Caco-2 (cell line): ENCODE measurements at regions of chr13 and their contacts with region 1.

Region 1: DNA sequence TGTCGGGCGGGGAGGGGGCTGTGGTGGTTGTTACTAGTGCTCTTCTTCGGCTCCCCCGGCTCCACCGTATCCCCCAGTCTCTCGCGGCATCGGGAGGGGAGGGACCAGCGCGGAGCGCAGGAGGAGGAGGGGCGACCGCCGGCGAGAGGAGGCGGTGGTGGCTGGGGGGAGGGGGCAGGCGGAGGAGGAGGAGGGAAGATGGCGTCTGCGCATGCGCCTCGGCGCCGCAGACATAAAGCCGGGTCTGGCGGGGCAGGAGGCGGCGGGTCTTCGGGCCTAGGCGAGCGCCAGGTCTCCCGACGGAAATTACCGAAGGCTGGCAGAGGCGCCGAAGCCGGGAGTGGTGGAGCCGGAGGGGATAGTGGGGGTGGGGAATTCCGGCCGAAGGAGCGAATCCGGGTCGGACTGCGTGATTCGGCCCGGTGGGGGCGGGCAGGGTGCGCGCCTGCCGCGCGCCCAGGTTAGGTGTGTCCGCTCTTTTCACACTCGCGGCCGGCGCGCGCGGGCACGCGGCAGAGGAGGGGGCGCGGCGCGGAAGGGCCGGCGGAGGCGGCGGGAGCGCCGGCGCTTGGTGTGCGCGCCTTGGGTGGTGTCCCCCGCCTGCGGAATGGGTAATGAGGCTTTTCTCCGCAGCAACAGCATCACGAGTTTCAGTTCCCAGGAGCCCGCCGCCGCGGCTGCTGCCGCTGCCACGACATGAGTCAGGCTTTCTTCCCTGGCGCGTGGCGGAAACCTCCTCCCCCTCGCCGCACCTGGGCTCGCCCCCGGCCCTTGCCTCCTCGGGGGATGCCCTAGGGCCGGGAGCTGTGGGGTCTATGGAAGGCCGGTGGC is 1.3 kb upstream of the TSC22D1 start:
- DNase-seq: peak; percentile 99
- H3K4me3 ChIP-seq: peak overlapping the region; percentile 99
- H3K4me3 Mint-ChIP-seq: peak overlapping the region; percentile 74
- H3K27ac Mint-ChIP-seq: peak overlapping the region; percentile 85
- H3K4me1 ChIP-seq: peaks cover 28% of the 10 kb centered on the region
- H3K4me1 Mint-ChIP-seq: peaks cover 28% of the 10 kb centered on the region
- H3K27me3 ChIP-seq: no peaks in the 10 kb centered on the region
- H3K27me3 Mint-ChIP-seq: no peaks in the 10 kb centered on the region
- CTCF ChIP-seq: no peak

Region 2: DNA sequence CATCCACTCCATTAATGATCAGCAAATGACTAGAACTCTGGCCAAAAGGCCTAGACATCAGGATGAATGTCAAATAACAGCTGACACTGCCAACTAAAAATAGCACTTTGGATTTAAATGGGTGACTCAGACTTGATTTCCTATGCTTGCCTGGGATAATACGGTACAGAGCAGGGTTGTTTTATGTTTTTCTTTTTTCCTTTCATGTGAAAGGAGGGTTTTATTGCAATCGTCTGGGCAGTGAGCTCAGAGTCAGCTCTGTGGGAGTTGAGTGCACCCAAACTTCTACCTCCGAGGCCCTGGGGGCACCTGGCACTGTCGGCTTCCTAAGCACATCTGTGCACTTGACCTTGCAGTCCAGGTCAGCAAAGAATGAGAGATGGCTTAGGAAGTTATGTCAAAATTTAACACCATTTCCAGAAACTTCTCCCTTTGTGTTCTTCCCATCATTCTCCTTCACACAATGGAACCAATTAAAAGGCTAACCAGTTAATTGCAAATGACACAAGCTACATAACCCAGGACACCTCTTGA is 563.6 kb before region 1 on chr13:
- CTCF ChIA-PET with region 1: interaction called, 12 read pairs
- POLR2A ChIA-PET with region 1: no interaction called
- intact Hi-C with region 1: no loop called
- DNase-seq: no peak
- H3K4me3 ChIP-seq: no peak overlapping the region
- H3K4me3 Mint-ChIP-seq: no peak overlapping the region
- H3K27ac Mint-ChIP-seq: no peak overlapping the region
- H3K4me1 ChIP-seq: no peaks in the 10 kb centered on the region
- H3K4me1 Mint-ChIP-seq: no peaks in the 10 kb centered on the region
- H3K27me3 ChIP-seq: no peaks in the 10 kb centered on the region
- H3K27me3 Mint-ChIP-seq: no peaks in the 10 kb centered on the region
- CTCF ChIP-seq: no peak

Region 3: DNA sequence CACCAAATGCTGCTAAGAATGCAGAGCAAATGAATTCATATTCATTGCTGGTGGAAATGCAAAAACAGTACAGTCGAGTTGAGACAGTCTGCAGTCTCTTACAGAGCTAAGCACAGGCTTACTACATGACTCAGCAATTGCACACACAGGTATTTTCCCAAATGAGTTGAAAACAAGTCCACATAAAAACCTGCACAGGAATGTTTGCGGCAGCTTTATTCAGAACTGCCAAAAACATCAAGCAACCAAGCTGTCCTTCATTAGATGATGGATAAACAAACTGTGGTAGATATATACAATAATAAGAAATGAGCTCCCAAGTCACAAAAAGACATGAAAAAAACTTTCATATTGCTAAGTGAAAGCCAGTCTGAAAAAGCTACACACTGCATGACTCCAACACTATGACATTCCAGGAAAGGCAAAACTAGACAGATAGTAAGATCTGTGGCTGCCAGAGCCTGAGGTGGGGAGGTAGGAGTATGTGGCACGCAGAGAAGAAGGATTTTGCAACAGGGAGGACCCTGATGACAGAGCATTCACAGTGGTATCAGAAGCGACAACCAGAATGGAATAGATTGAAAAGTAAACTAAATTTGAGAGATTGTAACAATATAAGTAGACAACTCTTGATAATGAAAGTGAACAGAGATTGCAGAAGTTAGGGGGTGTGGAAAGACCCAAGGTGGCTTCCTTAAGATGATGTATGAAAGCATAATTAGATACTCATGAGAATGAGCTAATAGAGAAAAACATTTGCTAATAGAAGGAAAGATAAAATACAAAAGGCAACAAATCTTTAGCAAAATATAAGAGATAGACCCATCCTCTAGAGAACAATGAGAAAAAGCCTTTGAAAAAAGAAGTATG is 54.1 kb before region 1 on chr13:
- CTCF ChIA-PET with region 1: interaction called, 3 read pairs
- POLR2A ChIA-PET with region 1: no interaction called
- intact Hi-C with region 1: loop called (anchors 1 kb)
- DNase-seq: peak in 1 of 2 experiments; percentile 43
- H3K4me3 ChIP-seq: no peak overlapping the region
- H3K4me3 Mint-ChIP-seq: no peak overlapping the region
- H3K27ac Mint-ChIP-seq: no peak overlapping the region
- H3K4me1 ChIP-seq: peaks cover 11% of the 10 kb centered on the region
- H3K4me1 Mint-ChIP-seq: peaks cover 15% of the 10 kb centered on the region
- H3K27me3 ChIP-seq: no peaks in the 10 kb centered on the region
- H3K27me3 Mint-ChIP-seq: no peaks in the 10 kb centered on the region
- CTCF ChIP-seq: no peak

Region 4: GRCh38 chr13:44565881-44566280 is 11.6 kb before region 1 on chr13:
- CTCF ChIA-PET with region 1: no interaction called
- POLR2A ChIA-PET with region 1: no interaction called
- intact Hi-C with region 1: no loop called
- DNase-seq: no peak
- H3K4me3 ChIP-seq: no peak overlapping the region
- H3K4me3 Mint-ChIP-seq: no peak overlapping the region
- H3K27ac Mint-ChIP-seq: no peak overlapping the region
- H3K4me1 ChIP-seq: peaks cover 20% of the 10 kb centered on the region
- H3K4me1 Mint-ChIP-seq: peaks cover 31% of the 10 kb centered on the region
- H3K27me3 ChIP-seq: no peaks in the 10 kb centered on the region
- H3K27me3 Mint-ChIP-seq: no peaks in the 10 kb centered on the region
- CTCF ChIP-seq: no peak

Region 5: DNA sequence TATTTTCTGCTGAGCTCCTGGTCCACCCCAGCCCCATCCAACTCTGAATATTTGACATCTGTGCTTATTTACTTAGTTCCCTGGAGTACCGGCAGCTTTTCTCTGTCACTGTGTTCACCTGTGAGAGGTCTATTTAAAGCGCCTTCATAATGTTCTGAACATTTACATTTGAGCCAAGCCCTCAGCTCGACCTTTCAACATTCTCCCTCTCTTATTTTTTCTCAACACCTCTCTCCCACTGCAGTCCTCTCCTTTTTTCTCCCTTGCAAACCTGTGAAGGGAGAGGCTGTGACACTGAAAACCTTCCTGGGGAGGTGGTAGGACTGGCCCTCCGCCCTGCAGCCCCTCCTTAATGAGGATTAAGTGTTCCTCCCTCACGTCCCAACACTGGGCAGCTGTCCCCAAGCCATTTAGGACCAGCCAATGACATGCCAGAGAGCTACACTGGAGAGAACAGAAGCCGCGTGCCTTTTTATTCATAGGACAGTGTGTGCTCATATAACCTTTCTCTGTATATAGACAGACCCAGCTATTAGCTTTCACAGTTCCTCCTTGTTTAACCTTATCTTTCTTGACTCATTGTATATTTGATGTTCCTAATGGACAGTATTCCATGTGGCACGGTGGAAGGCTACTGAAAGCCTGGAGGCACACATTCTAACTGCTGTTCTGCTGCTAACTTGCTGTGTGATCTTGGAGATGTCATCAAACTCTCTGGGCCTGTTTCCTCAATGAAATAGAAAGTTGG is 277.0 kb after region 1 on chr13:
- CTCF ChIA-PET with region 1: no interaction called
- POLR2A ChIA-PET with region 1: interaction called, 4 read pairs
- intact Hi-C with region 1: loop called (anchors 1 kb)
- DNase-seq: peak; percentile 66 to 79
- H3K4me3 ChIP-seq: peak overlapping the region; percentile 21
- H3K4me3 Mint-ChIP-seq: peak overlapping the region; percentile 74
- H3K27ac Mint-ChIP-seq: peak overlapping the region; percentile 73
- H3K4me1 ChIP-seq: peaks cover 37% of the 10 kb centered on the region
- H3K4me1 Mint-ChIP-seq: peaks cover 45% of the 10 kb centered on the region
- H3K27me3 ChIP-seq: no peaks in the 10 kb centered on the region
- H3K27me3 Mint-ChIP-seq: no peaks in the 10 kb centered on the region
- CTCF ChIP-seq: no peak

Region 6: GRCh38 chr13:44969551-44970484 is 392.4 kb after region 1 on chr13:
- CTCF ChIA-PET with region 1: no interaction called
- POLR2A ChIA-PET with region 1: no interaction called
- intact Hi-C with region 1: loop called (anchors 10 kb)
- DNase-seq: peak in 1 of 2 experiments; percentile 62
- H3K4me3 ChIP-seq: no peak overlapping the region
- H3K4me3 Mint-ChIP-seq: no peak overlapping the region
- H3K27ac Mint-ChIP-seq: no peak overlapping the region
- H3K4me1 ChIP-seq: peaks cover 14% of the 10 kb centered on the region
- H3K4me1 Mint-ChIP-seq: peaks cover 14% of the 10 kb centered on the region
- H3K27me3 ChIP-seq: no peaks in the 10 kb centered on the region
- H3K27me3 Mint-ChIP-seq: no peaks in the 10 kb centered on the region
- CTCF ChIP-seq: peak; percentile 74 to 81

Region 7: DNA sequence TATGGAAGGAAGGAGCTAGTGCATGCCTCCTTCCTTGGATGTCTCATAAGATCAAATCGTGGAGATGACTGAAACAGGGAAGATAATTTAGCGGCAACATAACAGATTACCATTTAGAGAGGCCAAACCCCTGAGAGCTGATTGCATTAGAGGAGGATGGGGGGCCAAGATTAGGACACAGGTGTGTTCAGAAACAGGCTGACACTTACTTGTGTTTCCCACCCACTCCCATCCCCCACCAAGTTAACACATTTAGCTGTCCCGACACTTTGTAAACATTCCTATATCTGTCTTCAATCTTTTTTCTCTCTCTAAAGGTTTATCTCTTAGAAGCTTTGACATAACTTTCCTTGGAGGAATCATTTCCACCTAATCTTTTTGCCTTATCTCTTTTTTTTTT is 672.2 kb after region 1 on chr13:
- CTCF ChIA-PET with region 1: interaction called, 11 read pairs
- POLR2A ChIA-PET with region 1: no interaction called
- intact Hi-C with region 1: no loop called
- DNase-seq: peak in 1 of 2 experiments; percentile 24
- H3K4me3 ChIP-seq: no peak overlapping the region
- H3K4me3 Mint-ChIP-seq: peak overlapping the region; percentile 2
- H3K27ac Mint-ChIP-seq: peak overlapping the region; percentile 65
- H3K4me1 ChIP-seq: peaks cover 44% of the 10 kb centered on the region
- H3K4me1 Mint-ChIP-seq: peaks cover 28% of the 10 kb centered on the region
- H3K27me3 ChIP-seq: no peaks in the 10 kb centered on the region
- H3K27me3 Mint-ChIP-seq: no peaks in the 10 kb centered on the region
- CTCF ChIP-seq: no peak